Astrocyte of the cerebellum (primary cell): ENCODE measurements at regions of chr18 and their contacts with region 1.

Region 1: DNA sequence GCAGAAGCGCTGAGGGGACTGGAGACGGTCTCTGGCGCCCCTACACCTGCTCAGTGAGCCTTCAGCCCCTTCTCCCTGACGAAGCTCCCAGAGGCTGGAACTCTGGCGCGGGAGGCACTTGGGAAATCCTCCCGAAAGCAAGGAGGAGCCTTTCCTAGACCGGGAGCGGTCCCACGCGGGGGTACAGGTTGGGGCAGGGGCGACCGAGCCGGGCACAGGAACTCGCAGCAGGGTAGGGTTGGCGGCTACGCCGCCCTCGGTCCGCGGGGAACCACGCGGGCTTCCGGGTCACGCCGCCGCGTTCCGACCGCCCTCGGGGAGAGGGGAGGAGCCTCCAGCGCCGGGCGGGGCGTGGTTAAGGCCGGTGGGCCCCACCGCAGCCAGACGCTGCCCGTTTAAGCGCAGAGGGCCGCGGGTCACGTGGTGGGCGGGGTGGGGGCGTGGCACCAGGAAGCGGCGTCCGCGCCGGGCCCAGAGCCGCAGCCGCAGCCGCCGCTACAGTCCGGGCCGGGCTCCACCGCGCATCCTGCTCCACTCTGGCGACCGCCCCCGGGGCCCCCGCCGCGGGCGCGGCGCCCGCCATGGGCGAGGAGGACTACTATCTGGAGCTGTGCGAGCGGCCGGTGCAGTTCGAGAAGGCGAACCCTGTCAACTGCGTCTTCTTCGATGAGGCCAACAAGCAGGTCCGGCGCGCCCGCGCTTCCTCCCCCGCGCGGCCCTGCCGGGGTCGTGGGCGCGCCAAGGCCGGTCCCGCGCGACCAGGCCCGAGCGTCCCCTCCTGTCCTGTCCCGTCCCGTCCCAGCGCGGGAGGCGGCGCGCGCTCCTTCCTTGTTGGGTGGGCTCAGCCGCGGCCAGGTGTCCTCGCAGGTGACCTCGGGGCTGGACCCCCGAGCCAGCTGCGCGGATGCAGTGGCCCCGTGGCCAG is at the start of gene RMC1:
- DNase-seq: peak; percentile 71
- H3K4me3 ChIP-seq: peak within 1 kb of the TSS; percentile 80
- CTCF ChIP-seq: no peak

Region 2: GRCh38 chr18:24118750-24119577 is 615.7 kb after region 1 on chr18:
- in situ Hi-C with region 1: loop called (anchors 25 kb)
- DNase-seq: peak; percentile 65
- H3K4me3 ChIP-seq: no peak overlapping the region
- CTCF ChIP-seq: peak; percentile 76